A549 (cell line): ENCODE measurements at regions of chr10 and their contacts with region 1.

Region 1: GRCh38 chr10:28381903-28382347 is 79.1 kb upstream of the MPP7 start:
- DNase-seq: peak; percentile 65 to 89
- ATAC-seq: peak; percentile 93 to 98
- H3K4me3 ChIP-seq: peak overlapping the region; percentile 29; the same call in 2 of the 3 replicates
- H3K27ac ChIP-seq: no peak overlapping the region
- H3K4me1 ChIP-seq: no peaks in the 10 kb centered on the region
- CTCF ChIP-seq: peak; percentile 96
- EP300 ChIP-seq: no peak
- POLR2A ChIP-seq: no peak
- RAD21 ChIP-seq: peak; percentile 91 to 96

Region 2: GRCh38 chr10:28250782-28251181 is 131.1 kb before region 1 on chr10:
- CTCF ChIA-PET with region 1: interaction called, 165 read pairs
- POLR2A ChIA-PET with region 1: no interaction called
- DNase-seq: peak in 1 of 2 experiments; percentile 12
- ATAC-seq: peak in 1 of 2 experiments; percentile 25; a peak in 1 of 6 replicates
- H3K4me3 ChIP-seq: no peak overlapping the region
- H3K27ac ChIP-seq: no peak overlapping the region
- H3K4me1 ChIP-seq: no peaks in the 10 kb centered on the region
- CTCF ChIP-seq: peak; percentile 51
- EP300 ChIP-seq: no peak
- POLR2A ChIP-seq: no peak
- RAD21 ChIP-seq: peak; percentile 62 to 72

Region 3: DNA sequence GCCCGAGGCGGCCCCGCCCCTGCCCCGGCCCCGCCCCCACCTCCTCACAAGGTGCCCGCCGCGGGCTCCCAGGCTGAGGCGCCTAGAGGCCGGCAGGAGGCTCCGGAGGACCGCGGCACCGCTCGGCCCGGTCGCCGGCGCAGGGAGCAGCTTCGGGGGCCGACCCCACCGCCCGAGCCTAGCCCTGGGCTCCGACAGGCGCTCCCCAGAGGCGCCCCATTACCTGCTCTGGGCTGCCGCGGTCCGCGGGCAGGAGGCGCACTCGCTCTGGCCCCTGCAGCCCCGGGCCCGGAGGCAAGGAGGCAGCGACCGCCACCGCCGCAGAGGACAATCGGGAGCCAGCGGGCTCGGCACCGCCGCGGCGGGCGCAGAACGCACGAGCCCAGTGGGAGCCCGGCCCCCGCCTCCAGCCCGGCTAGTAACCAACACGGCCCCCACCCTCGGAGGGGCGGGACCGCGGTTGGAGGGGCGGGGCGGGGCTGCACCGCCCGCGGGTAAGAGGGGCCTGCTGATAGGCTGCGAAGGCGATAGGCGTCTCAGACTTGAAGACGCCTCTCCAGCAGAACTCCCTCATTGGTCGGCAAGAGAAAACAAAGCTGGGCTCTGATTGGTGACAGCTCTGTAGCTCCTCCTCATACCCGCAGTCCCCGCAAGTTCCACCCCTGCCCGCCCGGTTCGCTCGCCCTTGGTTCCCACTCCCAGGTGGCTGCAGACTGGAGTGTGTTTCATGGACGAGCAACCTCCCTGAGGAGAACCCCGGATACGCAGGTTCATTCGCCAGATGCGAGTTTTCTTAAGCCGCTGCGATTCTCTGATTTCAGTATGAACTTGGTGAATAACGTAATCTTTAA is 79.1 kb before region 1 on chr10 and contains the start of gene MPP7:
- CTCF ChIA-PET with region 1: interaction called, 18 read pairs
- POLR2A ChIA-PET with region 1: interaction called, 4 read pairs
- DNase-seq: peak; percentile 97 to 98
- ATAC-seq: peak; percentile 99 to 100
- H3K4me3 ChIP-seq: peak within 1 kb of the TSS; percentile 72
- H3K27ac ChIP-seq: peak within 1 kb of the TSS; percentile 11 to 74; a peak in 4 of 6 replicates
- H3K4me1 ChIP-seq: no peaks in the 10 kb centered on the region
- CTCF ChIP-seq: peak; percentile 34; the same call in 2 of the 3 replicates
- EP300 ChIP-seq: no peak
- POLR2A ChIP-seq: no peak
- RAD21 ChIP-seq: peak; percentile 11 to 36; a peak in 2 of 5 replicates
- polyA plus RNA-seq, gene MPP7: 0.21 and 0.23 TPM in 2 replicates

Region 4: DNA sequence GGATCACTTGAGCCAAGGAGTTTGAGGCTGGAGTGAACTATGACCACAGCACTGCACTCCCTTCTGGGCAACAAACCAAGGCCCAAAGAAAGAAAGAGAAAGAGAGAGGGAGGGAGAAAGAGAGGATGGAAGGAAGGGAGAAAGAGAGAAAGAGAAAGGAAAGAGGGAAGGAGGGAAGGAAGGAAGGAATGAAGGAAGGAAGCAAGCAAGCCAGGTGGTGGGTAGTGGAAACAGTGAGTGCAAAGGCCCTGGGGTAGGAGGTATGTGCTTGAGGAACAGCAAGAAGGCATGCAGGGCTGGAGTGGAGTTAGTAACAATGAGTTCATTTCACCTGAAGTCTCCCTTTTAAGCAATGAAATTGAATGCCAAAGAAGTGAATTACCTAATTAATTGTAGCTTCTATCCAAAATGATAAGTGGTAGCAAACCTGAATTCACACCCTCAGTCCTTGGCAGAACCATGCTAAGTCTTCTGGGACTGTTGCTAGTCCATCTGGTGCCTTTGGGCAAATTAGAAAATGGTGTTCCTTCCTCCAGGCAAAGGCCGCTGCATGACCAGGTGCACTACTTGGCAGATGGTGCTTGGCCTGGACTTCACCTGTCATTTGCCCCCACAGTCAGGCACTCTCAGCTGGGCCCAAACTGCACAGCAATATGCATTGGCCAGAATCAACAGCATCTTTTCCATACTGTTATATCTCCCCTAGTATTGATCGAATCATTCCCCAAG is 11.7 kb before region 1 on chr10:
- CTCF ChIA-PET with region 1: interaction called, 20 read pairs
- POLR2A ChIA-PET with region 1: no interaction called
- DNase-seq: no peak
- ATAC-seq: no peak
- H3K4me3 ChIP-seq: no peak overlapping the region
- H3K27ac ChIP-seq: no peak overlapping the region
- H3K4me1 ChIP-seq: no peaks in the 10 kb centered on the region; the same call in 2 of the 3 replicates
- CTCF ChIP-seq: no peak
- EP300 ChIP-seq: no peak
- POLR2A ChIP-seq: no peak
- RAD21 ChIP-seq: no peak

Region 5: GRCh38 chr10:28410420-28411135 is 28.7 kb after region 1 on chr10:
- CTCF ChIA-PET with region 1: no interaction called
- POLR2A ChIA-PET with region 1: no interaction called
- DNase-seq: peak; percentile 10 to 65
- ATAC-seq: peak; percentile 57 to 82; a peak in 4 of 6 replicates
- H3K4me3 ChIP-seq: no peak overlapping the region
- H3K27ac ChIP-seq: no peak overlapping the region
- H3K4me1 ChIP-seq: 0 out of 3 replicates have a peak, but pooled peaks cover 5% of the 10 kb centered on the region
- CTCF ChIP-seq: no peak; the same call in 2 of the 3 replicates
- EP300 ChIP-seq: no peak
- POLR2A ChIP-seq: no peak
- RAD21 ChIP-seq: 0 out of 5 replicates have a peak, but pooled peaks of 1 of the 2 experiments have one; percentile 11

Region 6: GRCh38 chr10:28457110-28457509 is 75.2 kb after region 1 on chr10:
- CTCF ChIA-PET with region 1: no interaction called
- POLR2A ChIA-PET with region 1: no interaction called
- DNase-seq: no peak
- ATAC-seq: no peak
- H3K4me3 ChIP-seq: no peak overlapping the region
- H3K27ac ChIP-seq: no peak overlapping the region
- H3K4me1 ChIP-seq: no peaks in the 10 kb centered on the region
- CTCF ChIP-seq: no peak
- EP300 ChIP-seq: no peak
- POLR2A ChIP-seq: no peak
- RAD21 ChIP-seq: no peak

Region 7: DNA sequence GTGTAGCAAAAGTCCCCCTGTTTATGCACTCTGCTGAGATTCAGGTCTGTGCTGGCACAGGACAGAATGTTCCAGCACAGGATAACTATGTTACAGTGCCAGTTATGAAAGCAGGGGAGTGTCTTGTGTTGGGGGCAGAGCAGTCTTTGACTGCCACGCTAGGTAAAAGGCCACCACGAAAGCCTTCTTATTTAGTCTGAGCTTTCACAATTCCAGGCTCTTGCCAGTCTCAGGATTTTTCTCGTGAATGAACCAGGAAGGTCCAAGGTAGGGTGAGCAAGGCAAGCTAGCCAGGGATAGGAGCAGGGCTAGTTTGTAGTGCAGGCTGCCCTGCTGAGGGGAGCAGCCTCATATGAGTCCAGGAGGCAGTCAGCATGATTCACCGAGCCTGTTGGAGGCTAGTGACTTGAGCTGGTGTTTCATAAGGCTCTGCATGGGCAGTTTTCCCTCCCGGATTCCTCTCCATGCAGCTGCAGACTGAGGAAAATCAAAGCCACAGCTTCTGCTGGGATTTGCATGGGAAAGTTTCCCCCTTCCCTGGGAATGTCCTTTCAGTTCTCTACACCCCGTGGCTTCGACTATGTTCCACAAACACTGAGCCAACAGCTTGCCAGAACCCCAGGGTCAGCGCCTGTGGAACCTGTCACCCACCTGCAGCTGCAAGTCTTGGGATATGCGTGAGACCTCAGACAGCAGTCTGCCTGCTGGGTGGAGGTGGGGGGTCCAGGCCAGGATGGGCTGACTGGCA is 1565.2 kb after region 1 on chr10:
- CTCF ChIA-PET with region 1: no interaction called
- POLR2A ChIA-PET with region 1: no interaction called
- DNase-seq: peak in 1 of 2 experiments; percentile 17
- ATAC-seq: peak; percentile 87 to 89
- H3K4me3 ChIP-seq: no peak overlapping the region
- H3K27ac ChIP-seq: peak overlapping the region; percentile 72 to 79; a peak in 5 of 6 replicates
- H3K4me1 ChIP-seq: peaks cover 22% of the 10 kb centered on the region
- CTCF ChIP-seq: no peak
- EP300 ChIP-seq: no peak
- POLR2A ChIP-seq: no peak
- RAD21 ChIP-seq: no peak